Naive thymus-derived CD4-positive, alpha-beta T cell (primary cell): ENCODE measurements at regions of chr15 and their contacts with region 1.

Region 1: GRCh38 chr15:45402162-45402954 is 24.0 kb upstream of the GATM start:
- DNase-seq: peak; percentile 84 to 98 (median 96)
- ATAC-seq: peak; percentile 96
- H3K4me3 ChIP-seq: peak overlapping the region; percentile 86
- H3K4me3 Mint-ChIP-seq: peak overlapping the region; percentile 88 to 99 (median 96)
- H3K27ac ChIP-seq: peak overlapping the region; percentile 83
- H3K27ac Mint-ChIP-seq: peak overlapping the region; percentile 91 to 98 (median 95)
- H3K4me1 ChIP-seq: peaks cover 8 to 22% of the 10 kb centered on the region in 2 donors
- H3K4me1 Mint-ChIP-seq: peaks cover 18 to 40% (median 38%) of the 10 kb centered on the region in 7 donors
- H3K27me3 ChIP-seq: no peaks in the 10 kb centered on the region
- H3K27me3 Mint-ChIP-seq: peaks cover 0 to 14% (median 0%) of the 10 kb centered on the region in 5 donors

Region 2: DNA sequence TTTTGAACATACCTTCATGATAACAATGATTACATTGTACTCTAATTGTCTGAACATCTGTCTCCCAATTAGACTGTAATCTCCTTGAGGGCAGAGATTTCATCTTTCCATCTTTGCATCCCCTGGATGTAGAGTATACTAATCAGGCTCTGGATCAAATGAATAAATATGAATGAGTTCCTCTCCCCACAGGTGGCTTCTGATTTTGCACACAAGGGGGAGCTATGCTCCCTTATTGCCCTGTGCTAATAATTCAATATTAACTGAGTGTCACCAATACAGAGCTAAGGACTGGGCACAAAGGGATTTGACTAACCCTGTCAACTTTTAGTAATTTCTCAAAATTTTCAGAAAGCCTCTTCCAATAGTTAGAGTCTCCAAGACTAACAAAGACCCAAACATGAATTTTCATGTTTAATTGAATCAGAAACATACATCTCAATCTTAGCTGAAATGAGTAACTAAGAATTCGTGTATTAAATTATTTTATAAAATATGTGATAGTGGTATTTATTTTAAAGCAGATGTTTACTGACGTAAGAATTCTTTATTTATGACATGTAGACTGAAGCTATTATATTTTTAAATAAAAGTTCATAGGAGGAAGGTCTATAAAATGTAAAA is 275.7 kb before region 1 on chr15:
- CTCF ChIA-PET with region 1: interaction called, 5 read pairs
- POLR2A ChIA-PET with region 1: interaction called, 3 read pairs
- intact Hi-C with region 1: loop called (anchors 1 to 2 kb)
- DNase-seq: peak in 7 of 9 donors; percentile 17 to 51 (median 43)
- ATAC-seq: peak; percentile 72
- H3K4me3 ChIP-seq: no peak overlapping the region
- H3K4me3 Mint-ChIP-seq: no peak overlapping the region
- H3K27ac ChIP-seq: no peak overlapping the region
- H3K27ac Mint-ChIP-seq: no peak overlapping the region
- H3K4me1 ChIP-seq: no peaks in the 10 kb centered on the region
- H3K4me1 Mint-ChIP-seq: peaks cover 0 to 13% (median 6%) of the 10 kb centered on the region in 7 donors
- H3K27me3 ChIP-seq: peaks cover 0 to 8% of the 10 kb centered on the region in 2 donors
- H3K27me3 Mint-ChIP-seq: peaks cover 59 to 70% (median 61%) of the 10 kb centered on the region in 5 donors

Region 3: DNA sequence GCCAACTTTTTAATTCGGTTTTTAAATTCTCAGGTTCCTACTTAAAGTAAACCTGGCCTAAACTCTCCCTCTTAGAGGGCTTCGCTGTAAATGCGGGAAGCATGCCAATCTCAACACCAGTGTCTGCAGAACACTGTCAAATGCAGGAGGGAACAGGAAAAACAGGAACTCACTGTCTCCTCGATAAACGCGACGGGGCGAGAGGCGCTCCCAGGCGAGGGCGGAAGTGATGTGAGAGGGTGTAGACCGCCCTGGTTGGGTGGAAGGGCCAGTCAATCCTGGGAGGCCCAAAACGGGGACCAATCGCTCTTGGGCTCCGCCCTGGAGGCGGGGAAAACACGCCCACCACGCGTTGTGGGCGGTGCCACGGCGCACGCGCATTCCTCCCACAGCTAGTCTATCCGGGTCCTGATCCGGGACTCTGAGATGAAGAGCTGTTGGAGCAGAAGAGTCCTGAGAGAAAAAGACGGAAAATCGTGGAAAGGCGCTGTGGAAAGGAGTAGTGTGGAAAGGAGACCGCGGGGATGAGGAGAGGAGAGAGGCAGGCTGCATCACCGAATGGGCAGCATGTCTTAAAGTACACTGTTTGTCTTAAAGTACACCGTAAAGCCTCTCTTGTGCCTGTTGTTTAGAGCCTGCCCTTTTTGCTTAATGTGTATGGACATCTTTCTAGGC is 123.2 kb before region 1 on chr15:
- CTCF ChIA-PET with region 1: interaction called, 6 read pairs
- POLR2A ChIA-PET with region 1: interaction called, 13 read pairs
- intact Hi-C with region 1: loop called (anchors 1 kb)
- DNase-seq: peak; percentile 93 to 99 (median 98)
- ATAC-seq: peak; percentile 100
- H3K4me3 ChIP-seq: peak overlapping the region; percentile 90
- H3K4me3 Mint-ChIP-seq: peak overlapping the region; percentile 90 to 99 (median 95)
- H3K27ac ChIP-seq: peak overlapping the region; percentile 84
- H3K27ac Mint-ChIP-seq: peak overlapping the region; percentile 84 to 99 (median 93)
- H3K4me1 ChIP-seq: peaks cover 9 to 12% of the 10 kb centered on the region in 2 donors
- H3K4me1 Mint-ChIP-seq: peaks cover 10 to 34% (median 23%) of the 10 kb centered on the region in 7 donors
- H3K27me3 ChIP-seq: no peaks in the 10 kb centered on the region
- H3K27me3 Mint-ChIP-seq: peaks cover 0 to 1% (median 0%) of the 10 kb centered on the region in 5 donors

Region 4: GRCh38 chr15:45414215-45414885 is 12.0 kb after region 1 on chr15:
- CTCF ChIA-PET with region 1: interaction called, 3 read pairs
- POLR2A ChIA-PET with region 1: interaction called, 5 read pairs
- intact Hi-C with region 1: loop called in 1 of 2 experiments (anchors 1 kb)
- DNase-seq: peak in 1 of 9 donors; percentile 7
- ATAC-seq: no peak
- H3K4me3 ChIP-seq: no peak overlapping the region
- H3K4me3 Mint-ChIP-seq: peak overlapping the region in 4 of 10 donors; percentile 33 to 54 (median 42)
- H3K27ac ChIP-seq: no peak overlapping the region
- H3K27ac Mint-ChIP-seq: peak overlapping the region in 8 of 9 donors; percentile 3 to 62 (median 32)
- H3K4me1 ChIP-seq: peaks cover 6 to 15% of the 10 kb centered on the region in 2 donors
- H3K4me1 Mint-ChIP-seq: peaks cover 20 to 32% (median 24%) of the 10 kb centered on the region in 7 donors
- H3K27me3 ChIP-seq: no peaks in the 10 kb centered on the region
- H3K27me3 Mint-ChIP-seq: no peaks in the 10 kb centered on the region

Region 5: GRCh38 chr15:45522328-45523160 is 120.2 kb after region 1 on chr15 and contains the start of gene SLC30A4:
- CTCF ChIA-PET with region 1: no interaction called
- POLR2A ChIA-PET with region 1: no interaction called
- intact Hi-C with region 1: loop called in 1 of 2 experiments (anchors 1 kb)
- DNase-seq: peak; percentile 49 to 75 (median 66)
- ATAC-seq: peak; percentile 92
- H3K4me3 ChIP-seq: peak within 1 kb of the TSS; percentile 66
- H3K4me3 Mint-ChIP-seq: peak within 1 kb of the TSS; percentile 93 to 98 (median 94)
- H3K27ac ChIP-seq: peak within 1 kb of the TSS; percentile 64
- H3K27ac Mint-ChIP-seq: peak within 1 kb of the TSS; percentile 79 to 90 (median 85)
- H3K4me1 ChIP-seq: peaks cover 0 to 8% of the 10 kb centered on the region in 2 donors
- H3K4me1 Mint-ChIP-seq: peaks cover 23 to 43% (median 33%) of the 10 kb centered on the region in 7 donors
- H3K27me3 ChIP-seq: no peaks in the 10 kb centered on the region
- H3K27me3 Mint-ChIP-seq: peaks cover 0 to 40% (median 0%) of the 10 kb centered on the region in 5 donors
- total RNA-seq, gene SLC30A4: 2.6 to 4.4 (median 3.0) TPM